Activated CD8-positive, alpha-beta T cell treated with anti-CD3 and anti-CD28 coated beads for 36 hours (primary cell): ENCODE measurements at regions of chr18 and their contacts with region 1.

Region 1: DNA sequence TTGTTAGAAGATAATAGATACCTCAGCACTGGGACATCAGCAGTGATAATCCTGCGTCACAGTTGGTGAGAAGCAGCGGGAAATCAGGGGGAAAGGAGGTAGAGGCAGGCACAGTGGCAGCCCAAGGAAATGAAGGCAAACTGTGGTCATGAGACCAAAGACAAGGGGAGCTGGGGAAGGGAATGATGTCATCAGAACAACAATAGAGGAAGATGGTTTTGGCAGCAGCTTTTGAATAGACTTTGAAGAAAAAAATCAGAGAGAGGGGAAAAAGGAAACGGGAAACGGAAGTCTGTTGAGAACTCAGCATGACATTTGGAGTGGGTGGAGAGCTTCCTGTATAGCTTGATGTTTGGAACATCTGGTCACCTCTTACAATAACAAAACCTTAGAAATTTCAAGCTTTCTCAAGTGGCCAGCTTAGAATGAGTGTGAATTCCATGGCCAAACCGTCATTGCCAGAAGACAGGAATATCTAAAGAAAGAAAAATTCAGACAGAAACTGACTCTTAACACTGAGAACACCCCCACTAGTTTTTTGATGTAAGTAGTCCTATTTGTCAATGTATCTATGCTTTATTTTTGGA is 18.4 kb upstream of the YES1 start:
- DNase-seq: peak; percentile 50
- ATAC-seq: peak; percentile 78
- H3K4me3 Mint-ChIP-seq: peak overlapping the region; percentile 61
- H3K27ac Mint-ChIP-seq: peak overlapping the region; percentile 87
- H3K4me1 Mint-ChIP-seq: peaks cover 24% of the 10 kb centered on the region
- H3K27me3 Mint-ChIP-seq: no peaks in the 10 kb centered on the region
- CTCF ChIP-seq: no peak

Region 2: DNA sequence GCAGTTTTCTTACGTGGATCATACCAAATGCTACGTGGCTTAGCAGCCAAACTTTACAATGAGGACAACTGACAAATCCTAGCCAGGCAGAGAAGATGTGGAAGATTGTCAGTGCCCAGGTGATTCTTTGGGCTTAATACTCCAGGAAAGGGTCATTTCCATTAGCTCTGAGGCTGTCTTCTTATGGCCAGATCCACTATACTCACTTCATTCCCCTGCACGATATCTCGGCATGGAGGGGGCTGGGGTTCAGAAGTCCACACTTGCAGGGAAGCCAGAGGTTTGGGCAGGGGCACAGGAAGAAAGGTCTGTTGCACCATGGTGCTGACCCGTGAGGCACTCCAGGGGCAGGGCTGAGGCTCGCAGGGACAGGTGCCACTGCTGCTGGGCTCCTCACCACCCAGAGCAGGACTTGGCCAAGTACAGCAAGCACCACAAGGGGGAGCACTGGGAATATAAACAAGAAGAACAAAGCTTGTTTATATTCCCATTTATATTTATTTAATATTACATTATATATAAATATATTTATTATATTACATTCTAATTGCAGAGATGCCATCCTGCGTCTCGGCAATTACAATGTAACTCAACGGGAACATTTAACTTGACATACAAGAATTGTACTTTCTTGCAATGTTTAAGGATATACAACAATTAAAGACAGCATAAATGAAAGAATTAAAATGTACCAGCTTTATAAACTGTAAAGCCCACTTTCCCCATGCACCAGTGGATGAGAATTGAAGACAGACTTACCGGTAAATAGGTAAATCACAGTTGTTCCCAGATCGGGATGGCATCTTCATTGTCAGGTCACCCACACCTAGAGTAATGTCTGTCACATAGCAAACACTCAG is 206.4 kb before region 1 on chr18:
- CTCF ChIA-PET with region 1: interaction called, 73 read pairs
- POLR2A ChIA-PET with region 1: no interaction called
- intact Hi-C with region 1: loop called (anchors 5 kb)
- DNase-seq: peak; percentile 85
- ATAC-seq: peak; percentile 95
- H3K4me3 Mint-ChIP-seq: no peak overlapping the region
- H3K27ac Mint-ChIP-seq: no peak overlapping the region
- H3K4me1 Mint-ChIP-seq: no peaks in the 10 kb centered on the region
- H3K27me3 Mint-ChIP-seq: peaks cover 2% of the 10 kb centered on the region
- CTCF ChIP-seq: peak; percentile 95

Region 3: GRCh38 chr18:666628-667027 is 163.8 kb before region 1 on chr18:
- CTCF ChIA-PET with region 1: no interaction called
- POLR2A ChIA-PET with region 1: no interaction called
- intact Hi-C with region 1: no loop called
- DNase-seq: no peak
- ATAC-seq: no peak
- H3K4me3 Mint-ChIP-seq: no peak overlapping the region
- H3K27ac Mint-ChIP-seq: no peak overlapping the region
- H3K4me1 Mint-ChIP-seq: peaks cover 6% of the 10 kb centered on the region
- H3K27me3 Mint-ChIP-seq: no peaks in the 10 kb centered on the region
- CTCF ChIP-seq: no peak

Region 4: DNA sequence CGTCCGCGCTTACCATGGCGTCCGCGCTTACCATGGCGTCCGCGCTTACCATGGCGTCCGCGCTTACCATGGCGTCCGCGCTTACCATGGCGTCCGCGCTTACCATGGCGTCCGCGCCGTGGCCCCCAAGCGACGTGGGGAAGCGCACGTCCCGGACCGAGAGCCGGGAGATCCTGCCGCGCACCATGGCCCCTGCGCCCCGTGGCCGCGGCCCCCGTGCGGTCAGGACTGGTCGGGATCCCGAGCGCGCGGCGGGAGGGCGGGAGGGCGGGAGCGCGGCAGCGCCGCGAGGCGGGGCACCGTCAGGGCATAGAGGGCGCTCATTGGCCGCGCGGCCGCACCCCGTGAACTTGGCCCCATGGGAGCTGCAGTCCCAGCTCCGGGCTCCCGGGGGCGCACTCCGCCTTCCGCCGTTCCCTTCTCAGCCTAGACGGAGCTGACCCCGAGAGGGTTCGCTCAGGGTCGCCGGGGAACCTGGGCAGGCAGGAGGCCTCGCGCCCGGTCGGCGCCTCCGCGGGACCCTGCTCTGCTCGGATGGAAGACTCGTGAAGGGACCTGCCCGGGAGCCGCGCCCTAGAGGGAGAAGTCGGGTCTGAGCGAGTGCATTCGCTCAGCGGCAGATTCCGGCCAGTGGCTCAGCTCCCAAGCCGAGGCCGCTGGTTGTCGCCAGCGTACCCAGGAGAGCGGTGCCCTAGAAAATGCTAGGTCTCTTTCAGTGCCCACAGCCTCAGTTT is 117.8 kb before region 1 on chr18 and contains the start of gene ENOSF1:
- CTCF ChIA-PET with region 1: interaction called, 28 read pairs
- POLR2A ChIA-PET with region 1: interaction called, 9 read pairs
- intact Hi-C with region 1: loop called (anchors 10 kb)
- DNase-seq: peak; percentile 91
- ATAC-seq: peak; percentile 87
- H3K4me3 Mint-ChIP-seq: peak within 1 kb of the TSS; percentile 96
- H3K27ac Mint-ChIP-seq: peak within 1 kb of the TSS; percentile 97
- H3K4me1 Mint-ChIP-seq: peaks cover 64% of the 10 kb centered on the region
- H3K27me3 Mint-ChIP-seq: no peaks in the 10 kb centered on the region
- CTCF ChIP-seq: peak; percentile 87
- total RNA-seq, gene ENOSF1: 113 to 114 TPM

Region 5: DNA sequence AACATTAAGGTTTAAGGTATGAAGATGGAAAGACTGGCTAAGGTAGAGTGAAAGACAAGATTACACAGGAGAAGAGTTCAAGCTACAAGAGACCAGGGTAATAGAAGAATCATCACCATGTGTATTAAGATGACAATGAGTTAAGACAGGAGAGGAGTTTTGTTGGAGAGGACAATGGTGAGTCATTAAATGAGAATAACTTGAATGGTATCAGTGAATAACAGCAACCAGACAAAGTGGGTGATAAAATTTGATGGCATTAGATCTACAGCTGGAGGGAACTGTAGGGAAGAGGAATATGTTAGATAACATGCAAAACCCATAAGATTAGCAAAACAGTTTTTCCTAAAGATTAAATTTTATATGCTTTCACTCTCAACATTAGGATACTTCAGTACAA is 99.2 kb before region 1 on chr18:
- CTCF ChIA-PET with region 1: interaction called, 224 read pairs
- POLR2A ChIA-PET with region 1: no interaction called
- intact Hi-C with region 1: no loop called
- DNase-seq: no peak
- ATAC-seq: no peak
- H3K4me3 Mint-ChIP-seq: no peak overlapping the region
- H3K27ac Mint-ChIP-seq: peak overlapping the region; percentile 73
- H3K4me1 Mint-ChIP-seq: peaks cover 7% of the 10 kb centered on the region
- H3K27me3 Mint-ChIP-seq: no peaks in the 10 kb centered on the region
- CTCF ChIP-seq: no peak

Region 6: GRCh38 chr18:754666-755065 is 75.7 kb before region 1 on chr18:
- CTCF ChIA-PET with region 1: interaction called, 23 read pairs
- POLR2A ChIA-PET with region 1: no interaction called
- intact Hi-C with region 1: no loop called
- DNase-seq: no peak
- ATAC-seq: no peak
- H3K4me3 Mint-ChIP-seq: no peak overlapping the region
- H3K27ac Mint-ChIP-seq: no peak overlapping the region
- H3K4me1 Mint-ChIP-seq: peaks cover 3% of the 10 kb centered on the region
- H3K27me3 Mint-ChIP-seq: no peaks in the 10 kb centered on the region
- CTCF ChIP-seq: no peak

Region 7: GRCh38 chr18:789397-789796 is 41.0 kb before region 1 on chr18:
- CTCF ChIA-PET with region 1: interaction called, 13 read pairs
- POLR2A ChIA-PET with region 1: interaction called, 3 read pairs
- intact Hi-C with region 1: no loop called
- DNase-seq: no peak
- ATAC-seq: no peak
- H3K4me3 Mint-ChIP-seq: no peak overlapping the region
- H3K27ac Mint-ChIP-seq: no peak overlapping the region
- H3K4me1 Mint-ChIP-seq: peaks cover 41% of the 10 kb centered on the region
- H3K27me3 Mint-ChIP-seq: no peaks in the 10 kb centered on the region
- CTCF ChIP-seq: no peak